Activated naive CD4-positive, alpha-beta T cell treated with anti-CD3 and anti-CD28 coated beads for 36 hours (primary cell): ENCODE measurements at regions of chr2 and their contacts with region 1.

Region 1: GRCh38 chr2:218301176-218301819 is 9.0 kb upstream of the TMBIM1 start:
- DNase-seq: peak; percentile 97
- H3K4me3 Mint-ChIP-seq: no peak overlapping the region
- H3K27ac Mint-ChIP-seq: no peak overlapping the region
- H3K4me1 Mint-ChIP-seq: peaks cover 5% of the 10 kb centered on the region
- H3K27me3 Mint-ChIP-seq: no peaks in the 10 kb centered on the region

Region 2: DNA sequence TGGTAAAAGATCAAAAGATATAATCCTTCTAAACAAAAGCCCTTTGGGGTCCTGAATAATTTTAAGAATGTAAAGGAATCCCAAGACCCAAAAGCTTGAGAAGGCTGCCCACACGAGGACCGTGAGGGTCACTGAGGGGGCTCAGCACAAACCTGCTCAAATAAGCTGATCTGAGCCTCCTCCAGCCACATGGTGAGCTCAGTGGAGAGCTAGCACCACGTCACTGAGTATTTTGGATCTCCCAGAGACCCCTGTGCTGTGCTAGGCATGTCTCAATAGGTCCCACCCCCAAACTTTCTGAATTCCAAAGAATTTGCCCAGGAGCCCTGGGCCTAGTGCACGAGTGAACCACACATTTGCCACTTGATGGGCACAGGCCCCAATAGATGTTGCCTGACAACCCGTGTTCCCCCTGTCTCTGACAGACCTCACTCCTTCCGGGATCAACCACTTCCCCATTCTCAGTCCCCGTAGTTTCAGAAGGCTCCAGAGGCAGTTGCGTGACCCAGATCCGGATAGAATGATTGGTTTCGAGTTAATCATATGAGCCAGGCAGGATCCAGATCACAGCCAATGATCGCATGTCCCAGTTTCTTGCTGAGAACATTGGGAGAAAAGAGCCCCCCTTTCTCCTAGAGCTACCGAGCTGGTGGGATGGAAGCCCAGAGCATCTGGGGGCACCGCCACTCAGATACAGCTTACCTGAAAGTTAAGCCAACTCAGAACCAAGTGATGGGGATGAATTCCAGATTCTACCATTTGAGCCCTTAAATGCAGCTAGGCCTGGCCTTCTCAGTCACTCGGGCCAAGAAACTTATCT is 502.3 kb before region 1 on chr2:
- CTCF ChIA-PET with region 1: no interaction called
- intact Hi-C with region 1: no loop called
- DNase-seq: no peak
- H3K4me3 Mint-ChIP-seq: no peak overlapping the region
- H3K27ac Mint-ChIP-seq: no peak overlapping the region
- H3K4me1 Mint-ChIP-seq: no peaks in the 10 kb centered on the region
- H3K27me3 Mint-ChIP-seq: no peaks in the 10 kb centered on the region

Region 3: DNA sequence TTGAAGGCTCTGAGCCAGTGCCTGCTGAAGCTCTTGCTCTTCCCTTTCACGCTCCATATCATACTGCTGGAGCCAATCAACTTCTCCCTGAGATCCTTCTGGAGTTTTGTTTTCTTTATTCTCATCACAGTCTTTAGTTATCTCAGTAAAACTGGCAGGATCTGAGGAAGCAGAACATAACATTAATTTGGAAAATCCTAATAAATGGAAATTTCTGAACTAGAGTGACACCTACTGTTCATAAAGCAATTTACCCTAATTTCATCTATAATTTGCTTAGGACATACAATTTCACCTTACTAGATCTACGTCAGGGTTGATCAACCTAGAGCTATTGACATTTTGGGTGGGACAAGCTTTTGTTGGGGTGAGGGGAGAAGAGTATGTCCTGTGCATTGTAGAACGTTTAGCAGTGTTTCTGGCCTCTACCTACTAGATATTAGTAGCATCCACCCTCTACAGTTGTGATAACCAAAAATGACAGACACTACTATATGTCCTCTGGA is 164.8 kb after region 1 on chr2:
- CTCF ChIA-PET with region 1: interaction called, 3 read pairs
- intact Hi-C with region 1: loop called (anchors 1 kb)
- DNase-seq: no peak
- H3K4me3 Mint-ChIP-seq: no peak overlapping the region
- H3K27ac Mint-ChIP-seq: no peak overlapping the region
- H3K4me1 Mint-ChIP-seq: peaks cover 2% of the 10 kb centered on the region
- H3K27me3 Mint-ChIP-seq: no peaks in the 10 kb centered on the region